ENCODE measurements at regions of chr12 and their contacts with region 1.

Region 1: DNA sequence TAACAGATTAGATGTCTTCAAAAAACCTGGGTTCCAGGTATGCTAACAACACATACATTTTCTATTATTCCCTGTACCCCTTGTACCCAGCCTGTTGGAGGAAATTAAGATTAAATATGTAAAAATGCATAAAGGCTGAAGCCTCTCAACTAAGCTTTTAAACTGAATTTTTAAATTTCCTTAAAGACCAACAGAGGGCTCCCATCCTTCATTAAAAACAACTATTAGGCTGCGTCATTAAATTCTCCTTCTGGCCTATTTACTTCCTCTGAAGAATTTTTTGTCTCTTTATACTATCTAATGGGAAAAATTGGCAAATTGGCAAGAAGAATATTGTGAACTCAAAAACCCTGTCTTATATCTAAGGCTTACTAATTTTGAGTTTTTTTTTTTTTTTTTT is 21.8 kb downstream of the SENP1 start:
- DNase-seq: no peak
- ATAC-seq: peak; percentile 28
- H3K4me3 Mint-ChIP-seq: no peak overlapping the region
- H3K27ac Mint-ChIP-seq: no peak overlapping the region
- H3K4me1 Mint-ChIP-seq: peaks cover 11% of the 10 kb centered on the region
- H3K27me3 Mint-ChIP-seq: no peaks in the 10 kb centered on the region
- CTCF ChIP-seq: no peak

Region 2: DNA sequence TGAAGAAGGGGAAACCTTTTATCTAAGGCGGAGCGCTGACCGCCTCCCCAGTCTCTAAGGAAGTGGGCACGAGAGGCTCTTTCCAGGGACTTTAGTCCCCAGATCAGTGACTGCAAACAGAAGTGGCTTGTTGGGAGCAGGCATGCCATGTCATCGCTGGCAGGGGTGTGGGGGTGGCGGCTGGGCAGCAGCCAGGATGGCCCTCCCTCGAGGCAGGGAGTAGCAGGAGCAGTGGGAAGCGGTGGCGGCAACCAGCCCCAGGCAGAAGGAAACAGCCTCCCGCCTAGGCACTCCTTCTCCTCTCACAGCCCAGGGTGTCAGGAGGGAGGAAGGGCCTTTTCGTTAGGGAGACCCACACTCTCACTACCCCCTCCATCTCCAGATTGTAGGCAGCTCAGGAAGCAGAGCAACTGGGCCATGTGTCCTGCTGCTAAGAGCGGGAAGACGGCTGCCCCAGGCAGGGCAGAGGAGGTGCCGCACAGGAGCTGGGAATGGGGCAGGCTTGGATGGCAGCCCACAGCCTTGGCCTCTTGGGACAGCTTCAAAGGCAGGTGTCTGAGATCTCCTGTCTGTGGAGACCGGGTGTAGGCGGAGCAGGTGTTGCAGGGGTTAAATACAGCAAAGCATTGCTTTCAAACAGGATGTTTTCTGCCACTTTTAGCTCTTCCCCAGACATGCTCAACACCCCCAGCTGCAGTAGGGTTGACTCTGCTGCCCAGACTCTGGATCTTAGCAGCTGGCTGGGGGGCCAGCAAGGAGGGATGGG is 201.1 kb before region 1 on chr12:
- CTCF ChIA-PET with region 1: no interaction called
- POLR2A ChIA-PET with region 1: no interaction called
- intact Hi-C with region 1: no loop called
- DNase-seq: no peak
- ATAC-seq: peak; percentile 56
- H3K4me3 Mint-ChIP-seq: peak overlapping the region; percentile 78
- H3K27ac Mint-ChIP-seq: no peak overlapping the region
- H3K4me1 Mint-ChIP-seq: peaks cover 22% of the 10 kb centered on the region
- H3K27me3 Mint-ChIP-seq: peaks cover 9% of the 10 kb centered on the region
- CTCF ChIP-seq: no peak

Region 3: DNA sequence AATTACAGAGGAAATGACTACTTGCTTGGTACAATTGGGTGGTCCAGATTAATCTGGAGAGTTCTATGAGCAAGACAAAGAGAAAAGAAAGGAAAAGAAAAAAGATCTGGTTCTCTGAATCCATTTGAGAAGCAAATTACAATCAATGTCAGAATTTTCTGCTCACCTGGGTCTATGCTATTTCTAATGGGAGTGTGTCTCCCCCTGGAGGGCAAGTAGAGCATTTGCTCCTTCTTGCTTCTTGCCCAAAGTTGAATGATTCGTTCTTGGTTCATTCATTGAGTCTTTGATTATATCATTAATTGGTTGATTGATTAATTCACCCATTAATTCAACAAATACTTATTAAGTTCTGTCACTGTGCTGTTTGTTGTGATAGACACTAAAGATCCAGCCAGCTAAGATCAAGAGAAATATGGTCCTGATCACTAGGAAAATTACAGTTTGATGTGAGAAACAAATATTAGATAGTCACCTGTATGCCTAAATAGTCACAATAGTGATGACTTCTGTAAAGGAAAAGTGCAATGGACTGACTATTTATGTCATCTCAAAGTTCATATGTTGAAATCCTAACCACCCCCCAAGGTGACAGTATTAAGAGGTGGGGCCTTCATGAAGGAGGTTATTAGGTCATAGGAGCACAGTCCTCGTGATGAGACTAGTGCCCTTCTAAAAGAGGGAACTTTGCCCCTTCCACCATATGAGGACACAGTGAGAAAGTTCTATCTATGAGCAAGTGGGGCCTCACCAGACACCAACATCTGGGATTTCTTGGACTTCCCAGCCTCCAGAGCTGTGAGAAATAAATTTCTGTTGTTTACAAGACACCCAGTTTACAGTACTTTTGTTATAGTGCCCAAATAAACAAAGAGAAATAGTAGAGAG is 81.3 kb after region 1 on chr12:
- CTCF ChIA-PET with region 1: interaction called, 7 read pairs
- POLR2A ChIA-PET with region 1: no interaction called
- intact Hi-C with region 1: loop called (anchors 1 kb)
- DNase-seq: no peak
- ATAC-seq: peak; percentile 73
- H3K4me3 Mint-ChIP-seq: no peak overlapping the region
- H3K27ac Mint-ChIP-seq: no peak overlapping the region
- H3K4me1 Mint-ChIP-seq: no peaks in the 10 kb centered on the region
- H3K27me3 Mint-ChIP-seq: peaks cover 12% of the 10 kb centered on the region
- CTCF ChIP-seq: peak; percentile 69